BJ (cell line): ENCODE measurements at regions of chr10 and their contacts with region 1.

Region 1: DNA sequence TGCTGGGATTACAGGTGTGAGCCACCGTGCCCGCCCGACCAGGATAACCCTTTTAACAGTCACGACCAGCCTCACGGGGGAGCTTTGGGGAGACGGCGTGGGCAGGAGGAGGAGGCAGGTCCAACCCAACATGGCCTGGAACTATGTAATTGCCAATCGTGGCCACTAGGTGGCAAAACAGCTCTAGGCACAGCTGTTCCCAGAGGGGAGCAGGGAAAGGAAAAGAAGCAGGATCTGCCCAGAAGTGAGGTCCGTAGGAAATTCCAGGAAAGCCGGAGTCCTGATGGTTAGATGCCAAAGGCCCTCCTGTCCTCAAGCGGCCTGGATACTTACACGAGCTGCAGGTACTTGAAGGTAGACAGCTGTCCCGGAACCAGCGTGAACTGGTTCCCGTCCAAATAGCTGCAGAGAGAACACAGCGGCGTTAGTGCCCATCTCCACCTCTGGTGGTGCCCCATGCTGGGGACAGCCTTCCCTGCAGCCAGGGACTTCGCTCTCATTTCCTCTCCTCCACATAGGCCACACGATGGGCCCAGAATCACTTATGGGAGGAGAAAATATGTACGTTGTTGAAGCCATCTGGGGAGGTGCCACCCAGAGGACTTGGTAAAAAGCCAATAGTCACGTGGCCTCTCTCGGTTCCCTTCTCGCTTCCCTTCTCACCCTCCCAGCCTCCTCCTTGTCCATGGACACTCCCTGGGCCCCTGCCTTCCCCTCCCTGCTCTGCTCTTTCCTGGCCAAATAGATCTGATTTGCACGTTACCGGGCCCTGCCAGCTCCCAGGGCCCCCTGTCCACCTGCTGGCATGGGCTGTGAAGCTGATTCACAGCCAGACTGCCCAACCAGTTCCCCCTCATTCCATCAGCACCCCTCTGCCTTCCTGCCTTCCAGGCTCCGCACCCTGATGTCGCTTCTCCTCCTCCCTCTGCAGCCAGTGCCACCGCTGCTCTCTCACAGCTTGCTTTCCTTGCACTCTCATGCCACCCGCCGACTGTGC is 148.1 kb downstream of the SLIT1 start:
- DNase-seq: peak; percentile 18
- H3K4me3 ChIP-seq: peak overlapping the region; percentile 36
- H3K27me3 ChIP-seq: peaks cover 19% of the 10 kb centered on the region
- CTCF ChIP-seq: peak; percentile 90

Region 2: GRCh38 chr10:96910488-96911395 is 126.9 kb before region 1 on chr10:
- CTCF ChIA-PET with region 1: interaction called, 16 read pairs
- POLR2A ChIA-PET with region 1: no interaction called
- DNase-seq: no peak
- H3K4me3 ChIP-seq: no peak overlapping the region
- H3K27me3 ChIP-seq: no peaks in the 10 kb centered on the region
- CTCF ChIP-seq: peak; percentile 55

Region 3: GRCh38 chr10:96995851-96996250 is 41.8 kb before region 1 on chr10:
- CTCF ChIA-PET with region 1: interaction called, 14 read pairs
- POLR2A ChIA-PET with region 1: no interaction called
- DNase-seq: no peak
- H3K4me3 ChIP-seq: no peak overlapping the region
- H3K27me3 ChIP-seq: no peaks in the 10 kb centered on the region
- CTCF ChIP-seq: no peak

Region 4: DNA sequence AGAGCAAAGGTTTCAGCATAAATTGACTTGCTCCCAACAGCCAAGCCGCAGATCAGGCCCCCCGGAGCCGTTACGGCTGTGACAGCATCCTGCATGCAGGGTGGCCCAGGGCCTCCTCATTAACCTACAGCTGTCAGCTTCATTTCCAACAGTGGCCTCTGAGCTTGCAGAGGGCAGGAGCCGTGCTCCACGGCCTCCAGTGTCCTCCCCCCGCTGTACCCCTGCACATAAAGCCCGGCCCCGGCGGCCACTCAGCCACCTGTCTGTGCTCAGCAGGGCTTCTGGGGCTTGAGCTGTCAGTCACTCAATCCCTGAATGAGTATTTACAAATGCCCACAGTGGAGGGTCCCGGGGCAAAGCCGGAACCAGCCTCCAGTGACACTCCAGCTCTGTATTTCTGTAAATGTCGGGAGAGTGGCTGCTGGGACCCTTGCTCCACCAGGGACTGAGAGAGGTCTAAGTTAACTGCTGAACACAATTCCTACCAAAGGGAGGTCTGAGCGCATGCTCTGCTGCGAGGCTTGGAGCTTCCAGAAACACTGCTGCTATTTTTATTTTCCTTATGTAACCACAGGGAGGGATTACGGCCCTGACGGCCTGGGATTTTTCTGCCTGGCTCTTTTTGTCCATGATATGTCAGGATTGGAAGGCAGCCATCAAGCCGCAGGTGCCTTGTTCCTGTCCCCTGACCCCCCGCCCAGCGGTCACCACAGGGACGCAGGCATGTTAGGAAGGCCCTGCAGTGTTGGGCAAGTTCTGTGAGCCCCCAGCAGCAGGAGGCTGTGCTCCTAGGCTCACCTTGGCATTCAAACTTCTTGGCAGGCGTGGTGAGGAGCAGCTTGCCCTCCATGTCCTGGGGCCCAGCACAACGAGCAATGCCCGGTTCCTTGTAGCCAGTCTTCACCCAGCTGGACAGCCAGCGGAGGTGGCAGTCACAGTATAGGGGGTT is 16.9 kb before region 1 on chr10:
- CTCF ChIA-PET with region 1: interaction called, 51 read pairs
- POLR2A ChIA-PET with region 1: no interaction called
- DNase-seq: no peak
- H3K4me3 ChIP-seq: no peak overlapping the region
- H3K27me3 ChIP-seq: peaks cover 7% of the 10 kb centered on the region
- CTCF ChIP-seq: no peak

Region 5: DNA sequence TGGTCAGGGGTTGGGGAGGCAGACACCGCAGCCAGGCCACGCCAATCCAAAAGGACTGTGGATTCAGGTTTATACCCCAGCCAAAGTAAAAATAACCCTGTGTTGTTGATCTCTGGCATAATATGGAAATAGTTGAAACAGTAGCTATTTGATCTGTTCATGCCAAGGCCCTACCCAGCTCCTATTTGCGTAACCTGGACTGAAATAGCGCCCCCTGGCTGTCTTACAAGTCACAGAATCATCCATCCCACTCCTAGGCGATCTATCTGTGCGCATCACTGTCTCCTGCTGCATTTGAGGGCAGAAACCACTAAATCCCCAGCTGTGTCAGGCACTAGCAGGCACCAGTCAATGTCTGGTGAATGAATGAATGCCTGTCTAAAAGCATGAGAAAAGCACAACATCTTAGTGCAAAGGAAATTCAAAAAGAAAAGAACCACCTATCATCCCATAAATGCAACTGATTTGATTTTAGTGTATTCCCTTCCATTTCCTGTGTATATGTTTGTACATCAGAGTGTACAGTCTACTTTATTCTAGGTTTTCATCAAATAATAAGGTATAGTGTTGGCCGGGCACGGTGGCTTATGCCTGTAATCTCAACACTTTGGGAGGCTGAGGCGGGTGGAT is 11.9 kb before region 1 on chr10:
- CTCF ChIA-PET with region 1: interaction called, 51 read pairs
- POLR2A ChIA-PET with region 1: no interaction called
- DNase-seq: no peak
- H3K4me3 ChIP-seq: no peak overlapping the region
- H3K27me3 ChIP-seq: peaks cover 10% of the 10 kb centered on the region
- CTCF ChIP-seq: peak; percentile 53

Region 6: DNA sequence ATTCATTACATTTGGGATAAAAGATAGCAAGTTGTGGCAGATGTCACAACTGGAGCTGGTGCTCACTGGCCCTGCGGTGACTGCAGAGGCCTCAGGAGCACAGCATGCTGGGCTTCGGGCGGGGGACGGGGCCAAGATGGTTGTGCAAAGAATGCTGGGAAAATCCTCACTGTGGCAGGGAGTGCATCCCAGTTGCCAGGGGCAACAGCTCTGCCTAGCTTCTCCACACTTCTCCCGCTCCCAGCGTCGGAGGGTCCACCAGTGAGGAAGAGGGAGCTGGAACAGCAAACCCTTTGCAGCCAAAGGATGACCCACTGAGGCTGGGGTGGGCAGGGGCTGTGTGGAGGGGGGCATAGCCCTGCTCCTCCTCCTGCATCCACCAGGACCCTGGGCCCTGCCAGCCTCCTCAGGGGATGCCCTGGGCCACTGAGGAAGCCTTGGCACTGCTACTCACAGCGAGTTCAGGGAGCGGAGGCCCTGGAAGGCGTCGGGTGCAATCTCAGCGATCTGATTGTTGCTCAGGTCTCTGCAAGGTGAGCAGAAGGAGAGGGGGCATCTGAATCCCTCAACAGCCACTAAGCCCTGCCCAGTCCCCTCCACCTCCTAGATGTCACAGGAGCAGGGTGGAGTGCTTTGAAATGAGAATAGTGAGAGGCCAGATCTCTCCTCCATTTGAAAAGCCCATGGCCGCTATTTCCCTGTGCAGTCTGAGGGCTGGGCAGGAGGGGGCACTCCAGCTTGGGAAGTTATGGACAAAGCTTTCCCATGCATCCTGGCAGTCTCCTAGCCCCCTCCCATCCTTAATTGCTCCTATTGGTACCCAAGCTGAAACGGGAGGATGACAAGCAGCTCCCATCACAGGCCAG is 21.6 kb after region 1 on chr10:
- CTCF ChIA-PET with region 1: interaction called, 16 read pairs
- POLR2A ChIA-PET with region 1: no interaction called
- DNase-seq: no peak
- H3K4me3 ChIP-seq: no peak overlapping the region
- H3K27me3 ChIP-seq: peaks cover 4% of the 10 kb centered on the region; the same call in 1 of the 2 replicates
- CTCF ChIP-seq: no peak

Region 7: DNA sequence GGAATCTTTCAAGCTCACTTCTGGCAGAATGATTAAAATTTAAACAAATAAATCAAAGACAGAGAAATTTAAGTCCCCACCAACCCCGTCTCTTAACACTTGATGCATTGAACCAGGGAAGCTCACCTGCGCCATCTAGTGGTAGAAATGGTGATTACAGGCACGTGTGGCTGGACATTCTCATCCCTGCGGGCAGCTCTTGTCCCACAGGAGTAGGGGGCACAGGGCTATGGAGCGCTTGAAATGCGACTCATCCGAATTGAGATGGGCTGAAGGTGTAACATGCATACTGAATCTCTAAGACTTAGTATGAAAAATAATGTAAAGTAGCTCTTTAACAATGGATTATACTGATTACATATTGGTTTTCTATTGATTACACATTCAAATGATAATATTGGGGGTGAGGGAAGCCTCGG is 172.9 kb after region 1 on chr10:
- CTCF ChIA-PET with region 1: interaction called, 15 read pairs
- POLR2A ChIA-PET with region 1: no interaction called
- DNase-seq: no peak
- H3K4me3 ChIP-seq: no peak overlapping the region
- H3K27me3 ChIP-seq: no peaks in the 10 kb centered on the region
- CTCF ChIP-seq: peak; percentile 95